MCF 10A (cell line): ENCODE measurements at regions of chr12 and their contacts with region 1.

Region 1: GRCh38 chr12:47812797-47813510 is 6.7 kb downstream of the HDAC7 start:
- DNase-seq: peak; percentile 85
- H3K4me3 Mint-ChIP-seq: peak overlapping the region; percentile 68
- H3K27ac Mint-ChIP-seq: peak overlapping the region; percentile 85
- H3K4me1 Mint-ChIP-seq: peaks cover 75% of the 10 kb centered on the region
- H3K27me3 Mint-ChIP-seq: no peaks in the 10 kb centered on the region
- CTCF ChIP-seq: no peak

Region 2: GRCh38 chr12:47828608-47829536 is 15.9 kb after region 1 on chr12:
- CTCF ChIA-PET with region 1: interaction called, 16 read pairs
- POLR2A ChIA-PET with region 1: interaction called, 110 read pairs
- intact Hi-C with region 1: no loop called
- DNase-seq: peak; percentile 95
- H3K4me3 Mint-ChIP-seq: peak overlapping the region; percentile 66
- H3K27ac Mint-ChIP-seq: peak overlapping the region; percentile 80
- H3K4me1 Mint-ChIP-seq: peaks cover 59% of the 10 kb centered on the region
- H3K27me3 Mint-ChIP-seq: no peaks in the 10 kb centered on the region
- CTCF ChIP-seq: no peak